ENCODE measurements at regions of chr15 and their contacts with region 1.

Region 1: DNA sequence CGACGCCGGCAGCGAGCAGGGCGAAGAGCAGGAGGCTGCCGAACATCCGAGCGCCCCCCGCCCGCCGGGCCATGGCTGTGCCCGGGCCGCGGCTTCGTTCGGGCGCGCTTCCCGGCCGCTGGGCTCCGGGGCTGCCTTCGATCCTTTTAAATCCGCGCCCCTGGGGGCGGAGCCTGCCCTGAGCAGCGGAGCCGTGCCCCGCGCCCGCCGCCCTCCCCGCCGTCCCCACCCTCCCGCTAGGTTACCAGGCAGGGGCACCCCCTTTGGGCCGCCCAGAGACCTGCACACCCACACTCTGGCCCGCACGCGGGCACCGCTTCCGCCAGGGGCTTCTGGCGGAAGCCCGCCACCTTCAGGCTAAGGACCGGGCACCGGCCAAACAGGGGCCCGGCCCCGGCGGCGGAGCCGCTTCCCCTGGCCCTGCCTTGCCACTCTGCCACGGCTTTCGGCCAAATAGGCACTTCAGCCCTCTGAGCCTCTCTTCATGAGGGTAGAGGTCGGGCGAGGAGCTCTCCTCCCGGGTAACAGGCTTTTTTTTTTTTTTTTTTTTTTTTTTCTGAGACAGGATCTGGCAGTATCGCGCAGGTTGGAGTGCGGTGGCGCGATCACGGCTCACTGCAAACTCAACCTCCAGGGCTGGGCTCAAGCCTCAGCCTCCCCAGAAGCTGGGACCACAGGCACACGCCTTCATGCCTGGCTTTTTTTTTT is at the start of gene NMB:
- DNase-seq: peak; percentile 86
- ATAC-seq: peak; percentile 64
- H3K4me3 Mint-ChIP-seq: peak within 1 kb of the TSS; percentile 69
- H3K27ac Mint-ChIP-seq: peak within 1 kb of the TSS; percentile 83
- H3K4me1 Mint-ChIP-seq: peaks cover 31% of the 10 kb centered on the region
- H3K27me3 Mint-ChIP-seq: no peaks in the 10 kb centered on the region
- CTCF ChIP-seq: peak; percentile 71
- total RNA-seq, gene NMB: 1.7 to 2.7 TPM

Region 2: GRCh38 chr15:84057714-84058331 is 600.4 kb before region 1 on chr15:
- CTCF ChIA-PET with region 1: no interaction called
- POLR2A ChIA-PET with region 1: no interaction called
- intact Hi-C with region 1: no loop called
- DNase-seq: no peak
- ATAC-seq: no peak
- H3K4me3 Mint-ChIP-seq: no peak overlapping the region
- H3K27ac Mint-ChIP-seq: no peak overlapping the region
- H3K4me1 Mint-ChIP-seq: no peaks in the 10 kb centered on the region
- H3K27me3 Mint-ChIP-seq: peaks cover 3% of the 10 kb centered on the region
- CTCF ChIP-seq: no peak

Region 3: GRCh38 chr15:84588053-84588874 is 70.0 kb before region 1 on chr15:
- CTCF ChIA-PET with region 1: interaction called, 13 read pairs
- POLR2A ChIA-PET with region 1: interaction called, 3 read pairs
- intact Hi-C with region 1: no loop called
- DNase-seq: peak; percentile 92
- ATAC-seq: peak; percentile 100
- H3K4me3 Mint-ChIP-seq: peak overlapping the region; percentile 46
- H3K27ac Mint-ChIP-seq: no peak overlapping the region
- H3K4me1 Mint-ChIP-seq: peaks cover 3% of the 10 kb centered on the region
- H3K27me3 Mint-ChIP-seq: peaks cover 4% of the 10 kb centered on the region
- CTCF ChIP-seq: peak; percentile 83

Region 4: DNA sequence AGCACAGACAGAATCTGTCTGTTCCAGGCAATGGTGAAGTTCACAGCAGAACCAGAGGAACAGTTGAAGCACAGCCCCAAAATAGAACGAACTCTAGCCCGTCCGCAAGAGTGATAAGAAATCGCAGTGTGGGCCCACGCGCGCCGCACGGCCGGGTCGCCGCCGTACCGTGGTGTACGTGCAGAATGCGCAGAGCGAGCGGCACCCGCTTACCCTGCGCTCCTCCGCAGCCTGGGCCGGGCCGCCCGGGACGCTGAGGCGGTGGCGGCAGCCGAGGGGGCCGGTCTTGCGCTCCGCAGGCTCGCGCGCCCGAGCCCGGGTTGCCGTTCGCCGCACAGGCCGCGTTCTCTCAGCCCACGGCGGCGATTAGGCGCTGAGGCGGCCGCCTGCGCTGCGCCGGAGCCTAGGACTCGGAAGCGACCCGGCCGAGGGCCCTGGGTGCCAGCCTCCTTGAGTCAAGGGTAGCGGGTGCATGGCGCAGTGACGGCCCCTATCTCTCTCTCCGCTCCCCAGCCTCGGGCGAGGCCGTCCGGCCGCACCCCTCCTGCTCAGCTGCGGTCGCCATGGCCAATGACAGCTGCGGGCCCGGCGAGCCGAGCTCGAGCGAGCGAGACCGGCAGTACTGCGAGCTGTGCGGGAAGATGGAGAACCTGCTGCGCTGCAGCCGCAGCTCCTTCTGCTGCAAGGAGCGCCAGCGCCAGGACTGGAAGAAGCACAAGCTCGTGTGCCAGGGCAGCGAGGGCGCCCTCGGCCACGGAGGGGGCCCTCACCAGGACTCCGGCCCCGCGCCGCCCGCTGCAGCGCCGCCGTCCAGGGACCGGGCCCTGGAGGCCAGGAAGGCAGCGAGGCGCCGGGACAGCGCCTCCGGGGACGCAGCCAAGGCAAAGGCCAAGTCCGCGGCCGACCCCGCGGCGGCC is 24.7 kb before region 1 on chr15:
- CTCF ChIA-PET with region 1: interaction called, 11 read pairs
- POLR2A ChIA-PET with region 1: interaction called, 21 read pairs
- intact Hi-C with region 1: no loop called
- DNase-seq: peak; percentile 81
- ATAC-seq: peak; percentile 48
- H3K4me3 Mint-ChIP-seq: peak overlapping the region; percentile 94
- H3K27ac Mint-ChIP-seq: peak overlapping the region; percentile 96
- H3K4me1 Mint-ChIP-seq: peaks cover 33% of the 10 kb centered on the region
- H3K27me3 Mint-ChIP-seq: no peaks in the 10 kb centered on the region
- CTCF ChIP-seq: no peak

Region 5: GRCh38 chr15:84748274-84749110 is 90.3 kb after region 1 on chr15 and contains the start of gene ZNF592:
- CTCF ChIA-PET with region 1: interaction called, 10 read pairs
- POLR2A ChIA-PET with region 1: interaction called, 11 read pairs
- intact Hi-C with region 1: loop called (anchors 5 kb)
- DNase-seq: peak; percentile 73
- ATAC-seq: peak; percentile 47
- H3K4me3 Mint-ChIP-seq: peak within 1 kb of the TSS; percentile 95
- H3K27ac Mint-ChIP-seq: peak within 1 kb of the TSS; percentile 97
- H3K4me1 Mint-ChIP-seq: peaks cover 54% of the 10 kb centered on the region
- H3K27me3 Mint-ChIP-seq: no peaks in the 10 kb centered on the region
- CTCF ChIP-seq: no peak
- total RNA-seq, gene ZNF592: 18.1 to 18.3 TPM

Region 6: DNA sequence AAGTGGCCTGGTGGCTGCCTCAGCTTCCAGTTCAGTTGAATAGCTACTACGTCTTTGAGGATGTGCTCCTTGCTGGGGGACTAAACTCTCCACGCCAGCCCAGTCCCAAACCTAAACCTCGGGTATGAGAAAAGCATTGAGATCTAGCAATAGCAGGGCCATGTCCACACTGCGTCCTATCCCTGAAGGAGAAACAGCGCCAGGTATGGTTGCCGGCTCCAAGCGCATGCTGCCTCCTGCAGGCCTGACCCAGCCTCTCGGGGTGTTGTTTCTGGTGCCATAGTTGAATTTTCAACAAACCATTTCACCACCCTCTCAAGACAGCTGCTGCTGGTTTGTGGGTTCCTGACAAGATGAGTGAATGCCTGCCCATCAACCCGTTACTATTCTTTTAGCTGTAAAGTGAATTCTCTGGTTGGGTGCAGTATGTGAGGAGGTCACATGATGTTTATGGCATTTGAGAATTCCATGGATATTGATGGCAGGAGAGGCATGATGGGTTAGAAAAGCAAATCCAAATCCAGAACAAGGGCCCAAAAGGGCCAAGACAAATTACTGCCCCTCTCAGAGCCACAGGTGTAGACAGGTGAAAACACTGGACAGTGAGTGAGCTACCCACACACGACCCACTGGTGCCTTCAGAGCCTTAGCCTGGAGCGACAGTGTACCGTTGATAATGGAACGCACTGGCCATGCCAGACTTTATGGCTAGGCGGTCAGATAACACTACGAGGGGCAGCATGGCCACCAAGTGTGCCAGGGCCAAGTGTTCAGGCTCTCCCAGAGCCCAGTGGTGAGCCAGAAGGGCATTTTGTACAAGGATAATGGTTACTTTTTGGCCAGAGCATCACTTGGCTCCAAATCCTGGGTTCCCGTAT is 213.4 kb after region 1 on chr15:
- CTCF ChIA-PET with region 1: interaction called, 7 read pairs
- POLR2A ChIA-PET with region 1: no interaction called
- intact Hi-C with region 1: loop called (anchors 10 kb)
- DNase-seq: peak; percentile 9
- ATAC-seq: no peak
- H3K4me3 Mint-ChIP-seq: no peak overlapping the region
- H3K27ac Mint-ChIP-seq: no peak overlapping the region
- H3K4me1 Mint-ChIP-seq: no peaks in the 10 kb centered on the region
- H3K27me3 Mint-ChIP-seq: no peaks in the 10 kb centered on the region
- CTCF ChIP-seq: no peak

Region 7: GRCh38 chr15:84886211-84886983 is 228.2 kb after region 1 on chr15:
- CTCF ChIA-PET with region 1: no interaction called
- POLR2A ChIA-PET with region 1: no interaction called
- intact Hi-C with region 1: no loop called
- DNase-seq: no peak
- ATAC-seq: no peak
- H3K4me3 Mint-ChIP-seq: no peak overlapping the region
- H3K27ac Mint-ChIP-seq: no peak overlapping the region
- H3K4me1 Mint-ChIP-seq: peaks cover 2% of the 10 kb centered on the region
- H3K27me3 Mint-ChIP-seq: no peaks in the 10 kb centered on the region
- CTCF ChIP-seq: no peak

Region 8: GRCh38 chr15:85000189-85000864 is 342.1 kb after region 1 on chr15:
- CTCF ChIA-PET with region 1: no interaction called
- POLR2A ChIA-PET with region 1: no interaction called
- intact Hi-C with region 1: no loop called
- DNase-seq: no peak
- ATAC-seq: no peak
- H3K4me3 Mint-ChIP-seq: no peak overlapping the region
- H3K27ac Mint-ChIP-seq: no peak overlapping the region
- H3K4me1 Mint-ChIP-seq: peaks cover 27% of the 10 kb centered on the region
- H3K27me3 Mint-ChIP-seq: no peaks in the 10 kb centered on the region
- CTCF ChIP-seq: no peak

Measured in activated CD8-positive, alpha-beta T cell treated with anti-CD3 and anti-CD28 coated beads for 36 hours (primary cell).